ENCODE measurements at regions of chr1 and their contacts with region 1.

Region 1: DNA sequence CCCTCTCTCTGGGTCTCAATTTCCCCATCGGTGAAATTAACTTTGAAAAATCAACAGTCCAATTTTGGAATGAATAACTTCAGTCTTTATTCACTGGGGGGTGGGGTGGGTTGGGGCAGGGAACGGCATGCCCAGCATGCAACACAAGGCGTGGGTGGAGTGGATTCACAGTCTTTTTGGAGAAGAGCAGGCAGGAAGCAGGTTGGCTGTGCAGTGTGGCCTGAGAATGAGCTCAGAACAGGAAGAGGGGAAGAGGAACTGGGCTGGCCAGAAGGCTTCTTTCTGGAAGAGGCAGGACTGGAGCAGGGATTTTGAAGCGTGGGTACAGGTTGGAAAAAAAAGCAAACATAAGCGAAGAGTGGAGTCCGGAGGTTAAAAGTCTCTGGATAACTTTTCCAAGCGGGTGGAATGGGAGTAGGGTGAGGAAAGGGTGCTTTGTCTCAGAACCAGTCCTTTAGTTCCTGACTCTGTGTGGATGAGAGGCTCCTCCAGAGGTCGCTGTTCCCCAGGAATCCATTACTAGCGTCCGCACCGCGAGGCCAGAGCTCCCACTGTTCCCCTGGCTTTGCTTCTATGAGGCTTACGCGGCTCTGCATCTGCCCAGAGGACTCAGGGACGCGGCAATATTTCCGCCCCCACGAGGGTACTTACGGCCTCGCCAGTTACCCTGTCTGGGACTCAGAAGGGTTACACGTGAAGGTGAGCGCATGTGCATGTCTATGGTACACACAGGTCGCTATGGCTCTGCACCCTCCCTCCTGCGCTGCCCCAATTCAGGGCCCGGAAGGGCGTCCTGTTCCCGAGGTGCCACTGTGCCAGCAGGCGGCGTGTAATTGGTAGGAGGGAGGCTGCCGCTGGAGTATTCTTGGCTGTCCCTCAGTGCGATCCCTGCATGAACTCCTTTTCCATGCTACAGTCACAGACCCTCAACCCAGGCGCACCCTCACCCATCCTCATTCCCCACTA is 5.5 kb upstream of the FOXD2 start:
- DNase-seq: peak; percentile 79
- ATAC-seq: peak; percentile 67
- H3K4me3 ChIP-seq: no peak overlapping the region
- H3K27ac ChIP-seq: no peak overlapping the region
- H3K4me1 ChIP-seq: peaks cover 12% of the 10 kb centered on the region
- H3K27me3 ChIP-seq: no peaks in the 10 kb centered on the region; the same call in 1 of the 2 replicates
- CTCF ChIP-seq: peak; percentile 89
- POLR2A ChIP-seq: no peak
- RAD21 ChIP-seq: peak; percentile 76

Region 2: DNA sequence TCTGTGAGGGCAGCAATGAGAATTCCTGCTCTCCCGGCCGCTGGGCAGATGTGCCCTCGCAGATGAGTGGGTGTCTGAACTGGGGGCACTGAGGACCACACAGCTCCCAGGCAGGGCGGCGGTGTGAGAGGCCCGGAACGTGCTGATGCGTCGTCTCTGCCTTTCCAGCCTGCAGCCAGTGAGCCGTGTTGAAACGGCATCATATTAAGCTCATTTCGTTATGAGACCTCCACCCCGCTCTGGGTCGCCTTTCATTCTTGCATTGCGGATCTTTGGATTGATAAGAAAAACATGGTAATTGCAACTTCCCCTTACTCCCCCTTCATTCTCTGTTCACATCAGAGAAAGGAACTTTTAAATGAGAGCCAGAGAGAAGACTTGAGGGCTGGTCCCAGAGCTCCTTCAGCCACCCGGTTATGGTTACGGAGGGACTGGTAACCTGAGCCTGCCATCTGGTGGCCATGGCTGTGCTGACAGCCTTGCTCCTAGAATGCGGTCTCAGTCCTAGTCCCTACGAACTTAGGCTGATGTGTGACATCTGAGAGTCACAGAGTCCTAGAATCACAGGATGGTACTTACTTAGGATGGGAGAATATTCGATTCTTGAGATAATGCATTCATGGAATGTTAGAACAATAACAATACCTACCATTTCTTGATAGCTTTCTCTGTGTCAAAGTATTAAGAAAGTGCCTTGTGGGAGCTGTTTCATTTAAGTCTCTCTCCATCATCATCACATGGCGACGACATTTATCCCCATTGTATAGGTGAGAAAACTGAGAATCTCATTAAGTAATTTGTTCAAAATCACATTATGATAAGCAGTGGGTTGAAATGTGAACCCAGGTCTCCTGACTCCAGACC is 293.9 kb after region 1 on chr1:
- CTCF ChIA-PET with region 1: interaction called, 32 read pairs
- POLR2A ChIA-PET with region 1: no interaction called
- dilution Hi-C with region 1: no loop called
- in situ Hi-C with region 1: no loop called
- intact Hi-C with region 1: loop called (anchors 1 kb)
- DNase-seq: peak; percentile 63
- ATAC-seq: peak; percentile 98
- H3K4me3 ChIP-seq: no peak overlapping the region
- H3K27ac ChIP-seq: no peak overlapping the region
- H3K4me1 ChIP-seq: no peaks in the 10 kb centered on the region
- H3K27me3 ChIP-seq: peaks cover 21% of the 10 kb centered on the region
- CTCF ChIP-seq: peak; percentile 79
- POLR2A ChIP-seq: no peak
- RAD21 ChIP-seq: peak; percentile 66

Measured in IMR-90 (cell line).